ENCODE measurements at regions of chr17 and their contacts with region 1.

Region 1: DNA sequence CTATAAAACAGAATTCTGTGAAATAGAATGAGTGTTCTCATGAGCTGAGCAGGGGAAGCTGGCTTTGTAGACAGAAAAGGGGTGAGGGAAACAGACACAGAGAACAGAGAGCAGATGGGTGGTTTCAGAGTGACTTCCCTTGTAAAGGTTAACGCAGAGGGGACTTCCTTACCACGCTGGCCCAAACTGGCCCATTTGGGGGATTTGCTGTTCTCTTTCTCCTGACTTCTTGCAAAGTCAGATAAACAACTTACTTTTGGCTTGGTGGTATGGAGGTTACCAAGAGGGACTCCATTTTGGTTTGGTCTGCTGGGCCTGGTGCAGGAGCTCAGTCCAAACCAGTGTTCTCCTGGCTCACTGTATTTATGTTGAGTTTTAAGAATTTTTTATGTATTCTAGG is 48.4 kb downstream of the SEC14L1 start:
- DNase-seq: no peak
- H3K4me3 Mint-ChIP-seq: peak overlapping the region; percentile 22
- H3K27ac Mint-ChIP-seq: peak overlapping the region; percentile 85
- H3K4me1 Mint-ChIP-seq: peaks cover 24% of the 10 kb centered on the region
- H3K27me3 Mint-ChIP-seq: no peaks in the 10 kb centered on the region

Region 2: DNA sequence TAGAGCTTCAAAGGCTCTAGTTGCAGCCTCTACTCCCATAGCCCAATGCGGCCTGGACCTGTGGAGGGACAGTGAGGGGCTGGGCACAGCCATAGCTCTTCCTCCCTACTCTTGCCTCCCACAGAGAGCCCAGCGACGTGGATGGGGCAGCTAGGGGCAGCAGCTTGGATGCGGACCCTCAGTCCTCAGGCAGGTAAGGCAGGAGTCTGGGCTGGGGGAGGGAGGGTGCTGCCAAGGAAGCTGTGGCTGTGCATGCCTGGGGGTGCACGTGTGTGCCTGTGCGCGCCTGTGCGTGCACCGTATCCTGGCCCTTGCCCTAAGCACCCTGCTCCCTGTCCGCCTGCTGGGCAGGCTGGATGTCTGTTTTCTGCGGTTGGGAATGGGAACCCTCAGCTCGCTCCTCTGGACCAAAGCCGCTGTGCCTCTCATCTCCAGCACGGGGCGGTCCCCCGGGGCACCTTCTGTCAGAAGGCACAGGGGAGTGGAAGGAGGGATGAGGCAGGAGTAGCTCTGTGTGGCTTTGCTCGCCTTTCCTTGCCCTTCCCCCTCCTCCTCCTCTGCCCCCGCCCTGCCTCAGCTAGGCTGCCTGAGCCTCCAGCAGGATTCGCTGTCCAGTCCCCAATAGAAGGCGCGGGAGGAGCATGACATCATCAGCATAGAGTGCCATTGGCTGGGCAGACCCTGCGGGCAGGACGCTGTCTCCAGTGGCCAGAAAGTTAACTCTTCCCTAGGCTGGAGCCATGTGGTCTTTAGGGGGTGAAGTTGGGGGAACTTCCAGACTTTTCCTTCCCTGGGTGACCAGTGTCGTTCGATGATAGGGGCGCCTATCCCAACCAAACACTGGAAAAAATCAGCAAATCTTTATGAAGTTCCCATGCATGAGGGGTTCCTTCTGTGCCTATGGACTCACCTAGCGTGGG is 648.5 kb before region 1 on chr17:
- intact Hi-C with region 1: no loop called
- DNase-seq: peak; percentile 24
- H3K4me3 Mint-ChIP-seq: no peak overlapping the region
- H3K27ac Mint-ChIP-seq: no peak overlapping the region
- H3K4me1 Mint-ChIP-seq: no peaks in the 10 kb centered on the region
- H3K27me3 Mint-ChIP-seq: peaks cover 54% of the 10 kb centered on the region

Region 3: GRCh38 chr17:77088455-77089123 is 100.6 kb before region 1 on chr17:
- intact Hi-C with region 1: loop called (anchors 5 kb)
- DNase-seq: peak; percentile 80
- H3K4me3 Mint-ChIP-seq: peak overlapping the region; percentile 91
- H3K27ac Mint-ChIP-seq: peak overlapping the region; percentile 94
- H3K4me1 Mint-ChIP-seq: peaks cover 38% of the 10 kb centered on the region
- H3K27me3 Mint-ChIP-seq: peaks cover 2% of the 10 kb centered on the region

Region 4: GRCh38 chr17:77127735-77128361 is 61.3 kb before region 1 on chr17:
- intact Hi-C with region 1: loop called (anchors 10 kb)
- DNase-seq: peak; percentile 72
- H3K4me3 Mint-ChIP-seq: peak overlapping the region; percentile 68
- H3K27ac Mint-ChIP-seq: peak overlapping the region; percentile 94
- H3K4me1 Mint-ChIP-seq: peaks cover 31% of the 10 kb centered on the region
- H3K27me3 Mint-ChIP-seq: no peaks in the 10 kb centered on the region

Region 5: DNA sequence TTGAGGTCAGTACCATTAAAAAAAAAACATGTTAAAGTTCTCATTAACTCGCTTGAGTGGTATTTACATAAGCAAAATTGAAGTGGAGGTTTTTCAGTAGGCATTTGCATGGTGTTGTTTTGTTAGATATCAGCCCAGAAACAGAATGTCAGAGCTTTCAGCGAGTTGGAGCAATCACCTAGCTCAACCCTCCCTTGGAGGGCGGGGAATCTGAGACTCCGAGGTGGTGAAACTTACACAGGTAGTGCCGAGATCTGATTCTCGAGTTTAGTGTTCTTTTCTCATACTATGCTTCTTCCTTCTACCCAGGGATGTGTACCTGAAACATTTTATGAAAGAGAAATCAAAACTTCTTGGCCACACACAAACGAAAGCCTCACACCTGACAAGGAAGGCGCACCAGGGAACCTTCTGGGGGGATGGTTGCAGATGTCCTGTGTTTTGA is 41.8 kb before region 1 on chr17:
- intact Hi-C with region 1: no loop called
- DNase-seq: no peak
- H3K4me3 Mint-ChIP-seq: no peak overlapping the region
- H3K27ac Mint-ChIP-seq: no peak overlapping the region
- H3K4me1 Mint-ChIP-seq: peaks cover 55% of the 10 kb centered on the region
- H3K27me3 Mint-ChIP-seq: no peaks in the 10 kb centered on the region

Region 6: GRCh38 chr17:77214743-77215142 is 25.6 kb after region 1 on chr17:
- intact Hi-C with region 1: no loop called
- DNase-seq: no peak
- H3K4me3 Mint-ChIP-seq: no peak overlapping the region
- H3K27ac Mint-ChIP-seq: no peak overlapping the region
- H3K4me1 Mint-ChIP-seq: no peaks in the 10 kb centered on the region
- H3K27me3 Mint-ChIP-seq: no peaks in the 10 kb centered on the region